Activated naive CD4-positive, alpha-beta T cell treated with anti-CD3 and anti-CD28 coated beads for 36 hours (primary cell): ENCODE measurements at regions of chr4 and their contacts with region 1.

Region 1: GRCh38 chr4:15020502-15021286 is 18.4 kb downstream of the CPEB2 start:
- DNase-seq: no peak
- H3K4me3 Mint-ChIP-seq: no peak overlapping the region
- H3K27ac Mint-ChIP-seq: no peak overlapping the region
- H3K4me1 Mint-ChIP-seq: peaks cover 25% of the 10 kb centered on the region
- H3K27me3 Mint-ChIP-seq: no peaks in the 10 kb centered on the region

Region 2: GRCh38 chr4:15010038-15010585 is 10.6 kb before region 1 on chr4:
- CTCF ChIA-PET with region 1: no interaction called
- intact Hi-C with region 1: loop called (anchors 1 kb)
- DNase-seq: no peak
- H3K4me3 Mint-ChIP-seq: no peak overlapping the region
- H3K27ac Mint-ChIP-seq: no peak overlapping the region
- H3K4me1 Mint-ChIP-seq: peaks cover 14% of the 10 kb centered on the region
- H3K27me3 Mint-ChIP-seq: no peaks in the 10 kb centered on the region

Region 3: DNA sequence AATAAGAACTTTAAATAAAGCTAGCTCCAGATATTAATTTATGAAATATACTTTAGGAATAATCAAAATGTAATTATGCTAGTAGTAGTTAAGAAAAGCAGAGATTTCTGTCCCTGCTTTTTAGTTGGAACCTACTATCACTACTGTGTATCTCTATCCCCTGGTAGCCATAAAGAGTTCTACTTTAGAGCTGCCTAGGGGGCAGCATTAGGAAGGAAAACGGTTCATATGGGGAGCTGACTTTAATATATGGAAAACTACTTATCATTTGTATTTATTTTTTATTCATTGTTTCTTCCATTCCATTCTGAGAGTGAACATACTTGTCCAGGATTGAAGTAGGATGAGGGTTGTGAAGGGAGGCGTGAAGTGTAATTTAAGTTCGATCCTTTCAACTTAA is 22.5 kb after region 1 on chr4:
- CTCF ChIA-PET with region 1: no interaction called
- intact Hi-C with region 1: no loop called
- DNase-seq: no peak
- H3K4me3 Mint-ChIP-seq: no peak overlapping the region
- H3K27ac Mint-ChIP-seq: no peak overlapping the region
- H3K4me1 Mint-ChIP-seq: no peaks in the 10 kb centered on the region
- H3K27me3 Mint-ChIP-seq: no peaks in the 10 kb centered on the region

Region 4: GRCh38 chr4:15182600-15183220 is 162.0 kb after region 1 on chr4:
- CTCF ChIA-PET with region 1: no interaction called
- intact Hi-C with region 1: loop called (anchors 5 kb)
- DNase-seq: peak; percentile 56
- H3K4me3 Mint-ChIP-seq: no peak overlapping the region
- H3K27ac Mint-ChIP-seq: no peak overlapping the region
- H3K4me1 Mint-ChIP-seq: peaks cover 25% of the 10 kb centered on the region
- H3K27me3 Mint-ChIP-seq: no peaks in the 10 kb centered on the region